Motor neuron (in vitro differentiated cells): ENCODE measurements at regions of chr10 and their contacts with region 1.

Region 1: DNA sequence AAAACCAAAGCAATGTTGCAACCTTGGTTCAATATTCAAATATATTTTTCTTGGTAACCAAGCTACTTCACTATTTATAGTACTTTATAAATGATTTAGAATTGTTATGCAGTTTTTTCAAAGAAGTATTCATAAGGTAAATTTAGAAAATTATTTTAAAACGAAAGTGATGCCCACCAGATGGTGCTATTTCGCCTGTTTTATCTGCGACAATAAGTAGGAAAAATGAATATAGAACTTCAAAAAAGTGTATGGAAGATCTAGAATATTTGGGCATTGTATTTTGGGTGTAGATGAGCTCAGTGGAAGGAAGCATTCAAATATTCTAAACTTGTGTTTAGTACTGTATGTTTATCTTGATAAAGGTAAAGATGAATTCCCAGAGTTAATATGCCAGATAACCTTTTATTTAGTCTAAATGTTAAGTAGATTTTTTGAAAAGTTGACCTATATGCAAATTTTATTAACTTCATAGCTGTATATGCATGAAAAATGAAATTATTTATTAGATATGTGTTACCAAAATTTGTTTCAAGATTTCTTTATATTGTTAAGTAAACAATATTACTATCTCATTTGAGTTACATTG is 93.2 kb downstream of the ADK start:
- ATAC-seq: no peak
- H3K4me3 ChIP-seq: no peak overlapping the region
- H3K27ac ChIP-seq: no peak overlapping the region
- H3K4me1 ChIP-seq: no peaks in the 10 kb centered on the region

Region 2: GRCh38 chr10:73940634-73941221 is 303.5 kb before region 1 on chr10:
- in situ Hi-C with region 1: no loop called
- ATAC-seq: peak; percentile 69 to 100 (median 84)
- H3K4me3 ChIP-seq: no peak overlapping the region
- H3K27ac ChIP-seq: peak overlapping the region in 1 of 2 donors; percentile 28
- H3K4me1 ChIP-seq: peaks cover 4 to 9% of the 10 kb centered on the region in 2 donors

Region 3: DNA sequence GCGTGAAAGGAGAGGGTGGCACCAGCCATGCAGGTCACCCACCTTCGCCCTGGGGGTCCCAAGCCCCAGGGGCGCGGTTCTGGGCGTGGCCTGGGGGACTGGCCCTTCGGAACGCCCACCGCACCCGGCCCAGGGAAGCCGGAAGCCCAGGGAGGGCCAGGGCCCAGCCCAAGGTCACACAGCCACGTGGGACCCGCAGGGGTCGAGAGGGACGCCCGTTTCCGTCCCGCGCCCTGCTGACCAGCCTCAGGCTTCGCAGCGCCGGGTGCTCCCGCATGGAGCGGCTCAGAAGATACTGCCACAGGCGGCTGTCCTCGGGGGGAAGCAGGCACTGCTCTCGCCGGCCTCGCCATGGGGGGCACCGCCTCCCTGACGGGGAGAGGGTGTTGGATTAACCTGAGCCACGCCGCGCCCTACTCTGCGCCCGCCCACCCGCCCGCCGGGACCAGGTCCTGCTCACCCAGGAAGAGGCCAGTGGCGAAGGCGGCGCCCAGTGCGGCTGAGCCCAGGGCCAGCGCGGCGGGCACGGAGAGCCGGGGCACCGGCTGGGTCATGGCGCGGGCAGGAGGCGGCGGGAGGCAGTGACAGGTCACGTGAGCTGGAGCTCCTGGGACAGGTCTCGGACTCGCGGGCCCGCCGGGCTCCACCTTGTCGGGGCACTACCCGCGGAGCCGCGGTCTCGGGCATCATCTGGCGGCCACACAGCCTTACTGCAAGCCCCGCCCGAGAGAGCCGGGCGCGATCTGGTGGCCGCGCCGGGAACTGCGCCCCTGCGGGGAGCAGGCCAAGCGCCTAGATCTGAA is 991.4 kb after region 1 on chr10 and contains the start of gene COMTD1:
- in situ Hi-C with region 1: loop called in 1 of 9 experiments (anchors 25 kb)
- ATAC-seq: peak; percentile 44 to 82 (median 76)
- H3K4me3 ChIP-seq: peak within 1 kb of the TSS; percentile 35 to 49 (median 41)
- H3K27ac ChIP-seq: peak within 1 kb of the TSS; percentile 30 to 45
- H3K4me1 ChIP-seq: peaks cover 6 to 15% of the 10 kb centered on the region in 2 donors
- total RNA-seq, gene COMTD1: 5.5 to 19.1 (median 12.8) TPM

Region 4: GRCh38 chr10:75272896-75273295 is 1028.7 kb after region 1 on chr10:
- in situ Hi-C with region 1: no loop called
- ATAC-seq: peak in 2 of 8 experiments; percentile 76 to 88
- H3K4me3 ChIP-seq: no peak overlapping the region
- H3K27ac ChIP-seq: no peak overlapping the region
- H3K4me1 ChIP-seq: no peaks in the 10 kb centered on the region